Heart left ventricle (tissue), 16 donors: ENCODE measurements at regions of chr9 and their contacts with region 1.

Region 1: DNA sequence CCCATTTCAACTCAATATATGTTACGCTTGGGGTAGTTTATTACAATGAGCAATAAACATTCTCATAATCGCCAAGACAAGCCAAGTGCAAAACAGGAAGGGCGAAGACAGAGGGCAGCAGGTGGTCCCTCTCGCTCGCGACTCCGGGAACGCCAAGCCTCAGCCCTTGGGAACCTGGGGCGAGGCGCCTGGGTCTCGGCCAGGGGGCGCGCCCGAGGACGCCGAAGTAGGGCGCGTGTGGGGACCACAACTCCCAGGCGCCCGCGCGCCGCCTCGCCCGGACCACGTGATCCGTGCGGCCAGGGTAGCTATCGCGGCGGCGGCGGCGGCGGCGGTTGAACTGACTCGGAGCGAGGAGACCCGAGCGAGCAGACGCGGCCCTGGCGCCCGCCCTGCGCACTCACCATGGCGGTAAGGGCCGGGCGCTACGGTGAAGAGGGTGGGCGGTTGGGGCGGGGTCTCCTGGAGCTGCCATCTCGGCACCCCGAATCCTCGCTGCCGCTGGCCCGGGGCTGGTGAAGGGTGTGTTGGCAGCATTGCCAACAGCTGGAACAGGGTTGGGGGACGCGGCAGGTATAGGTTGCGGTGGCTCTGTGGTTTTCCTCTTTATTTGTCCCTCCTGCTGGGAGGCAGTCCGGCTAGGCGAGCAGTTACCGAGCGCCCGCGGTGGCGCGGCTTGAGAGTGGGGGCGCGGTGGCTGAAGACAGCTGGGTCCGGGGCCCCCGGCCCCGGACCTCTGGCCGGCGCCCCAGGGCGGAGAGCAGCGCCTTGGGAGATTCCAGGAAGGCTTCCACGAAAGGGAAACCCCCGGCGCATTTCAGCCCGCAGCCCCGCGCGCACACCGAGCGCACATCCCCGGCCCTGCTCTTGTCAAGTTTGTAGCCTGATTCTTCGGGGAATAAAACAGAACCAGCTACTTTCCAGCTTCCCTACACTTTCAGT is at the start of gene SLC31A2:
- DNase-seq: peak; percentile 90 to 96 (median 91)
- ATAC-seq: peak; percentile 90 to 97 (median 95)
- H3K4me3 ChIP-seq: peak within 1 kb of the TSS; percentile 72 to 98 (median 94)
- H3K27ac ChIP-seq: peak within 1 kb of the TSS; percentile 48 to 91 (median 80)
- H3K4me1 ChIP-seq: peaks cover 0 to 59% (median 14%) of the 10 kb centered on the region in 12 donors
- H3K27me3 ChIP-seq: no peaks in the 10 kb centered on the region
- CTCF ChIP-seq: peak in 10 of 12 donors; percentile 32 to 67 (median 44)
- POLR2A ChIP-seq: peak; percentile 14 to 82
- total RNA-seq, gene SLC31A2: 5.2 to 26.4 (median 13.8) TPM

Region 2: GRCh38 chr9:113056191-113057106 is 94.5 kb before region 1 on chr9 and contains the start of gene ZFP37:
- intact Hi-C with region 1: loop called in 1 of 10 experiments (anchors 10 kb)
- DNase-seq: peak; percentile 94 to 96 (median 95)
- ATAC-seq: peak; percentile 97 to 100 (median 100)
- H3K4me3 ChIP-seq: peak within 1 kb of the TSS; percentile 33 to 91 (median 78)
- H3K27ac ChIP-seq: peak within 1 kb of the TSS in 11 of 12 donors; percentile 22 to 83 (median 77)
- H3K4me1 ChIP-seq: peaks cover 0 to 9% (median 0%) of the 10 kb centered on the region in 12 donors
- H3K27me3 ChIP-seq: peaks cover 10 to 30% (median 22%) of the 10 kb centered on the region in 9 donors
- CTCF ChIP-seq: peak in 1 of 12 donors; percentile 23
- POLR2A ChIP-seq: peak in 1 of 2 donors; percentile 32
- total RNA-seq, gene ZFP37: 0.51 to 3.1 (median 1.0) TPM

Region 3: GRCh38 chr9:113221003-113221799 is 70.3 kb after region 1 on chr9 and contains the starts of genes FKBP15 and SLC31A1:
- intact Hi-C with region 1: loop called in 1 of 10 experiments (anchors 1 kb)
- DNase-seq: peak; percentile 98 to 99 (median 98)
- ATAC-seq: peak; percentile 99 to 100 (median 99)
- H3K4me3 ChIP-seq: peak within 1 kb of the TSS; percentile 66 to 95 (median 82)
- H3K27ac ChIP-seq: peak within 1 kb of the TSS; percentile 68 to 92 (median 88)
- H3K4me1 ChIP-seq: peaks cover 0 to 73% (median 41%) of the 10 kb centered on the region in 12 donors
- H3K27me3 ChIP-seq: no peaks in the 10 kb centered on the region
- CTCF ChIP-seq: peak in 1 of 12 donors; percentile 8
- POLR2A ChIP-seq: peak in 1 of 2 donors; percentile 77
- total RNA-seq, gene FKBP15: 15.8 to 45.5 (median 18.7) TPM
- total RNA-seq, gene SLC31A1: 7.9 to 18.2 (median 10.7) TPM